CD8-positive, alpha-beta T cell (primary cell): ENCODE measurements at regions of chr9 and their contacts with region 1.

Region 1: GRCh38 chr9:71544464-71544863 is 223.8 kb downstream of the CEMIP2 start:
- DNase-seq: no peak
- ATAC-seq: no peak
- H3K4me3 ChIP-seq: no peak overlapping the region
- H3K4me3 Mint-ChIP-seq: no peak overlapping the region
- H3K27ac ChIP-seq: no peak overlapping the region
- H3K27ac Mint-ChIP-seq: no peak overlapping the region
- H3K4me1 ChIP-seq: no peaks in the 10 kb centered on the region
- H3K4me1 Mint-ChIP-seq: no peaks in the 10 kb centered on the region
- H3K27me3 ChIP-seq: no peaks in the 10 kb centered on the region
- H3K27me3 Mint-ChIP-seq: peaks cover 37% of the 10 kb centered on the region
- CTCF ChIP-seq: no peak

Region 2: GRCh38 chr9:71567890-71568289 is 23.4 kb after region 1 on chr9:
- CTCF ChIA-PET with region 1: no interaction called
- POLR2A ChIA-PET with region 1: no interaction called
- intact Hi-C with region 1: loop called in 1 of 2 experiments (anchors 2 kb)
- DNase-seq: no peak
- ATAC-seq: no peak
- H3K4me3 ChIP-seq: no peak overlapping the region
- H3K4me3 Mint-ChIP-seq: no peak overlapping the region
- H3K27ac ChIP-seq: no peak overlapping the region
- H3K27ac Mint-ChIP-seq: no peak overlapping the region
- H3K4me1 ChIP-seq: no peaks in the 10 kb centered on the region
- H3K4me1 Mint-ChIP-seq: no peaks in the 10 kb centered on the region
- H3K27me3 ChIP-seq: no peaks in the 10 kb centered on the region
- H3K27me3 Mint-ChIP-seq: peaks cover 17% of the 10 kb centered on the region
- CTCF ChIP-seq: no peak